T-cell (primary cell): ENCODE measurements at regions of chr7 and their contacts with region 1.

Region 1: GRCh38 chr7:156566812-156567549 is 73.6 kb upstream of the RNF32 start:
- DNase-seq: no peak
- ATAC-seq: no peak
- H3K4me3 ChIP-seq: no peak overlapping the region
- H3K4me3 Mint-ChIP-seq: no peak overlapping the region
- H3K27ac ChIP-seq: no peak overlapping the region
- H3K27ac Mint-ChIP-seq: no peak overlapping the region
- H3K4me1 ChIP-seq: no peaks in the 10 kb centered on the region
- H3K4me1 Mint-ChIP-seq: no peaks in the 10 kb centered on the region
- H3K27me3 ChIP-seq: peaks cover 0 to 6% of the 10 kb centered on the region in 2 experiments
- H3K27me3 Mint-ChIP-seq: peaks cover 9 to 17% of the 10 kb centered on the region in 2 donors

Region 2: GRCh38 chr7:155995183-155995612 is 571.8 kb before region 1 on chr7:
- CTCF ChIA-PET with region 1: no interaction called
- POLR2A ChIA-PET with region 1: no interaction called
- DNase-seq: peak in 3 of 35 experiments; percentile 11 to 21 (median 13)
- ATAC-seq: peak in 3 of 4 experiments; percentile 29 to 61 (median 39)
- H3K4me3 ChIP-seq: peak overlapping the region in 1 of 2 donors; percentile 60
- H3K4me3 Mint-ChIP-seq: peak overlapping the region in 2 of 3 donors; percentile 13 to 81
- H3K27ac ChIP-seq: no peak overlapping the region
- H3K27ac Mint-ChIP-seq: no peak overlapping the region
- H3K4me1 ChIP-seq: peaks cover 47 to 66% of the 10 kb centered on the region in 2 experiments
- H3K4me1 Mint-ChIP-seq: peaks cover 41 to 68% (median 47%) of the 10 kb centered on the region in 3 donors
- H3K27me3 ChIP-seq: peaks cover 0 to 52% of the 10 kb centered on the region in 2 experiments
- H3K27me3 Mint-ChIP-seq: peaks cover 0 to 29% of the 10 kb centered on the region in 2 donors

Region 3: GRCh38 chr7:156554500-156554899 is 12.5 kb before region 1 on chr7:
- CTCF ChIA-PET with region 1: no interaction called
- POLR2A ChIA-PET with region 1: no interaction called
- DNase-seq: no peak
- ATAC-seq: no peak
- H3K4me3 ChIP-seq: no peak overlapping the region
- H3K4me3 Mint-ChIP-seq: no peak overlapping the region
- H3K27ac ChIP-seq: no peak overlapping the region
- H3K27ac Mint-ChIP-seq: no peak overlapping the region
- H3K4me1 ChIP-seq: no peaks in the 10 kb centered on the region
- H3K4me1 Mint-ChIP-seq: no peaks in the 10 kb centered on the region
- H3K27me3 ChIP-seq: peaks cover 0 to 10% of the 10 kb centered on the region in 2 experiments
- H3K27me3 Mint-ChIP-seq: peaks cover 0 to 2% of the 10 kb centered on the region in 2 donors

Region 4: DNA sequence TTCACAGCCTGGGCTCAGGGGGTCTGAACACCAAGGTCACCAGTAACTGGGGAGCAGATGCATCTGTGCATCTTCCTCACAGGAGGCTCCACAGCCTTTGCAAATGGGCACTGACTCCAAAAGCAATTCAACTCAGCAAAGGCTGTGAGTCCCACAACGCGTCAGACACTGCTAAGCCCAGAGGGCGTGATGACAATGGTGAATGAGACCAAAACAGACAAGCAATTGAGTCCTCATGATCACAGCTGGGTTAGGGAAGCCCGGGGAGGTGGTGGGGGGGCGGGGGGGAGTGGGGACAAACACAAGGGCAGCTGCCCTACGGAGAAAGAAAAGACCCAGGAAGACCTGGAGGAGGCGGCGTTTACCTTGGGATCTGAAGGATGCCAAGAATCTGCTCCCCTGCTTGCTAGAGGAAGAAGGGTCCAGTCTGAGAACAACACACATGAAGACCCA is 12.0 kb after region 1 on chr7:
- CTCF ChIA-PET with region 1: no interaction called
- POLR2A ChIA-PET with region 1: interaction called in 1 of 2 experiments, 10 read pairs
- DNase-seq: no peak
- ATAC-seq: no peak
- H3K4me3 ChIP-seq: no peak overlapping the region
- H3K4me3 Mint-ChIP-seq: no peak overlapping the region
- H3K27ac ChIP-seq: no peak overlapping the region
- H3K27ac Mint-ChIP-seq: no peak overlapping the region
- H3K4me1 ChIP-seq: no peaks in the 10 kb centered on the region
- H3K4me1 Mint-ChIP-seq: no peaks in the 10 kb centered on the region
- H3K27me3 ChIP-seq: peaks cover 0 to 8% of the 10 kb centered on the region in 2 experiments
- H3K27me3 Mint-ChIP-seq: peaks cover 12 to 27% of the 10 kb centered on the region in 2 donors